A549 (cell line): ENCODE measurements at regions of chr12 and their contacts with region 1.

Region 1: GRCh38 chr12:31272607-31273225 is 53.2 kb downstream of the SINHCAF start:
- DNase-seq: no peak
- ATAC-seq: peak; percentile 42 to 60; a peak in 5 of 6 replicates
- H3K4me3 ChIP-seq: no peak overlapping the region
- H3K27ac ChIP-seq: no peak overlapping the region
- H3K4me1 ChIP-seq: no peaks in the 10 kb centered on the region
- CTCF ChIP-seq: no peak
- EP300 ChIP-seq: no peak
- POLR2A ChIP-seq: no peak
- RAD21 ChIP-seq: no peak

Region 2: DNA sequence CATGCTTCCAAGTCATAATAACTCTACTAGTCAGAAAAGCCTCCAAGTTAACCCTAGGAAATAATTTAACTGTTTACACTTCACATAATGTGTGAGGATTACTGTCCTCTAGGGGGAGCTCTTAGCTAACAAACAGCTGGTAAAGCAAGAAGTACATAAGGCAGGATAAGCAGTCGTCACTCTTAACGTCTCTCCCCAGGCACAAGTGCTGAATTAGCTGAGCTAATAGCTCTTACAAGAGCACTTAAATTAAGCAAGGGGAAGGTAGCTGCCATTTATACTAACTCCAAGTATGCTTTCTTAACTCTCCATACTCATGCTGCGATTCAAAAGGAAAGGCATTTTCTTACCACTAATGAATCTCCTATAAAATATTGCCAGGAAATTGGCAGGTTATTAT is 425.5 kb before region 1 on chr12:
- CTCF ChIA-PET with region 1: interaction called, 25 read pairs
- POLR2A ChIA-PET with region 1: no interaction called
- DNase-seq: peak in 1 of 2 experiments; percentile 81
- ATAC-seq: peak in 1 of 2 experiments; percentile 70; a peak in 3 of 6 replicates
- H3K4me3 ChIP-seq: no peak overlapping the region
- H3K27ac ChIP-seq: no peak overlapping the region
- H3K4me1 ChIP-seq: no peaks in the 10 kb centered on the region
- CTCF ChIP-seq: peak; percentile 98
- EP300 ChIP-seq: no peak
- POLR2A ChIP-seq: no peak
- RAD21 ChIP-seq: peak; percentile 92 to 97

Region 3: GRCh38 chr12:30965613-30965985 is 307.1 kb before region 1 on chr12:
- CTCF ChIA-PET with region 1: no interaction called
- POLR2A ChIA-PET with region 1: no interaction called
- DNase-seq: peak; percentile 18 to 41
- ATAC-seq: peak; percentile 60 to 77; a peak in 3 of 6 replicates
- H3K4me3 ChIP-seq: no peak overlapping the region
- H3K27ac ChIP-seq: no peak overlapping the region
- H3K4me1 ChIP-seq: no peaks in the 10 kb centered on the region
- CTCF ChIP-seq: no peak; the same call in 2 of the 3 replicates
- EP300 ChIP-seq: no peak
- POLR2A ChIP-seq: no peak
- RAD21 ChIP-seq: 0 out of 5 replicates have a peak, but pooled peaks of 1 of the 2 experiments have one; percentile 15

Region 4: DNA sequence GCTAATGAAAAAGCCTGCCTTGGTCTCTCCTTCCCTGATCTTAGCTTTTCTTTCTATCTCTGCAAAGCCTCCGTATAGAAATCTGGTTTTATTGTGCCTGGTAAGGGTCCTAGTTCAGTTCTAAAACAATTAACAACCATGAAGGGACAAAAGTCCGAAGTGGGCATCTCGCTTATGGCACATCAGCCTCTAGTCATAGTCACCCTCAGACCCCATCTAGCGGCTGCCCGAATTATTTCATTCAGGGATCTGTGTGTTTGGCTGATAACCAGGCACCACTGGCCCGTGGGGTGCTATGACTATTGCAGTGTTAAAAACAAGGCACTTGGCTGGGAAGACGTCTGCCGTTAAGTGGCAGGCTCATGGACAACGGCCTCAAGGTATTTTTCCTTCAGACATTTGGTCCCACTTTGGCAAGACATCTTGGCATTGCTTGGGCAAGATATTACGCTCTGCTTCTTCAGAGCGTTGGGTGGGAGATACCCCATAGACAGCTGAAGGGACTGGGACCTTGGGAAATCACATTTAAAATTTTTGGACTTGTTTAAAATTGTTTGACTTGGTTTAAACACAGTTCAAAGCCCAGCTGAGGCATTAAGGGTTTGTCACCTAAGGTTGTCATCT is 33.8 kb before region 1 on chr12:
- CTCF ChIA-PET with region 1: interaction called, 19 read pairs
- POLR2A ChIA-PET with region 1: no interaction called
- DNase-seq: peak; percentile 67 to 79
- ATAC-seq: peak; percentile 85 to 91; a peak in 5 of 6 replicates
- H3K4me3 ChIP-seq: 0 out of 3 replicates have a peak overlapping the region, but pooled peaks have one; percentile 16
- H3K27ac ChIP-seq: no peak overlapping the region
- H3K4me1 ChIP-seq: no peaks in the 10 kb centered on the region
- CTCF ChIP-seq: peak; percentile 71
- EP300 ChIP-seq: no peak
- POLR2A ChIP-seq: no peak
- RAD21 ChIP-seq: peak; percentile 58 to 70

Region 5: GRCh38 chr12:31259136-31259886 is 13.4 kb before region 1 on chr12:
- CTCF ChIA-PET with region 1: interaction called, 43 read pairs
- POLR2A ChIA-PET with region 1: no interaction called
- DNase-seq: no peak
- ATAC-seq: no peak
- H3K4me3 ChIP-seq: no peak overlapping the region
- H3K27ac ChIP-seq: no peak overlapping the region
- H3K4me1 ChIP-seq: no peaks in the 10 kb centered on the region
- CTCF ChIP-seq: no peak
- EP300 ChIP-seq: no peak
- POLR2A ChIP-seq: no peak
- RAD21 ChIP-seq: no peak

Region 6: DNA sequence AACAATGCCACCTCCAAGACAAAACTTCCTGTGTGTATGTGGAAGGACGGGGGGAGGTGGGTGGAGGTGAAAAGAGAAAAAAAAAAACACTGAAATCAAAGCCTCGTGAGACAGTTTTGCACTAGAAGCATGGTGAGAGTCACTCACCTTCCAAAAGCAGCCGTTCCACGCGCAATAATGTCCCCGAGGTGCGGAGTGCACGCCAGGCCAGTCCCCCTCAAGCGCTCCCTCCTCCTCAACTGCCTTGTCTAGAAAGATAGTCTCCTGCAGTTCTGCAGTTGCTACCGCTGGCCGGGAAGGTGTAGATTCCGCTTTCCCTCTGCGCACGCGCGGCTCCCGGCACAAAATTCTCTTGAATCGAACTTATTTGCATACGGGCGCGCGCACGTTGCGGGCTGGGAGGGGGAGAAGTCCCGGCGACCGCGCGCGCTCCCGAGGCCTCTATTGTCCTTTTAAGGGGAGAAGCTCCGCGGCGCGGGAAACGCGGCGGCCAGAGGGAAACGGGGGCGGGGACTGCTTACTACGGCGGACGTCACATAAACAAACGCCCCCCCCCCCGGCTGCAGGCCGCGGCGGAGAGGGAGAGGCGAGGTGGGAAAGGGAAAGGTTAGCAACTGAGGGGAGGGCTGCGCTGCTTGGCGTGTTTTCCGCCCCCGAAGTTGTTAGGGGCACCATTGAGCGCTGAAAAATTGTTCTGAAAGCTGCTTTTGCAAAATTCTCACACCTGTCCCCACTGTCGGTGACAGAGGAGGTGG is 53.3 kb after region 1 on chr12 and contains the start of gene SINHCAF:
- CTCF ChIA-PET with region 1: interaction called, 12 read pairs
- POLR2A ChIA-PET with region 1: interaction called, 6 read pairs
- DNase-seq: peak; percentile 91 to 99
- ATAC-seq: peak; percentile 72 to 84
- H3K4me3 ChIP-seq: peak within 1 kb of the TSS; percentile 86
- H3K27ac ChIP-seq: peak within 1 kb of the TSS; percentile 88 to 97
- H3K4me1 ChIP-seq: peaks cover 26% of the 10 kb centered on the region
- CTCF ChIP-seq: no peak
- EP300 ChIP-seq: no peak
- POLR2A ChIP-seq: peak; percentile 94
- RAD21 ChIP-seq: no peak
- polyA plus RNA-seq, gene SINHCAF: 81.8 and 106 TPM in 2 replicates